Activated CD8-positive, alpha-beta T cell treated with anti-CD3 and anti-CD28 coated beads, Interleukin-2, amount 10 ng/mL, durations not matched to agents 7 days and 5 days (primary cell): ENCODE measurements at regions of chr2 and their contacts with region 1.

Region 1: GRCh38 chr2:69816923-69817542 is 12.4 kb upstream of the GMCL1 start:
- DNase-seq: peak; percentile 87
- ATAC-seq: peak; percentile 75
- H3K4me3 Mint-ChIP-seq: no peak overlapping the region
- H3K27ac Mint-ChIP-seq: no peak overlapping the region
- H3K4me1 Mint-ChIP-seq: peaks cover 11% of the 10 kb centered on the region
- H3K27me3 Mint-ChIP-seq: no peaks in the 10 kb centered on the region

Region 2: GRCh38 chr2:69734035-69734631 is 82.9 kb before region 1 on chr2:
- CTCF ChIA-PET with region 1: interaction called, 21 read pairs
- POLR2A ChIA-PET with region 1: no interaction called
- DNase-seq: no peak
- ATAC-seq: no peak
- H3K4me3 Mint-ChIP-seq: no peak overlapping the region
- H3K27ac Mint-ChIP-seq: no peak overlapping the region
- H3K4me1 Mint-ChIP-seq: no peaks in the 10 kb centered on the region
- H3K27me3 Mint-ChIP-seq: peaks cover 13% of the 10 kb centered on the region

Region 3: DNA sequence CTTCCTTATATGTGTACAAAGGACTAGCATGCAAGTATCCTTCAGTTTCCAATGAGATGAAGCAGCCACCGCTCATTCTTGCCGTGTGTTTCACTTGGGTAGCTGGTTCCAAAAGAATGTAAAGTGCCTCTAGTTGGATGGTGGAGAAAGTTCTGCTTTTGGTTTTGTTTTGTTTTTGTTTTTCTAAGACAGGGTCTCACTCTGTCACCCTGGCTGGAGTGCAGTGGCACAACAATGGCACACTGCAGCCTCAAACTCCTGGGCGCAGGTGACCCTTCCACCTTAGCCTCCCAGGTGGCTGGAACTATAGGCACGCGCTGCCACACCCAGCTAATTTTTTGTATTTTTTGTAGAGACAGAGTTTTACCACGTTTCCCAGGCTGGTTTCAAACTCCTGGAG is 66.8 kb before region 1 on chr2:
- CTCF ChIA-PET with region 1: interaction called, 58 read pairs
- POLR2A ChIA-PET with region 1: interaction called, 4 read pairs
- DNase-seq: no peak
- ATAC-seq: no peak
- H3K4me3 Mint-ChIP-seq: no peak overlapping the region
- H3K27ac Mint-ChIP-seq: no peak overlapping the region
- H3K4me1 Mint-ChIP-seq: peaks cover 7% of the 10 kb centered on the region
- H3K27me3 Mint-ChIP-seq: no peaks in the 10 kb centered on the region

Region 4: DNA sequence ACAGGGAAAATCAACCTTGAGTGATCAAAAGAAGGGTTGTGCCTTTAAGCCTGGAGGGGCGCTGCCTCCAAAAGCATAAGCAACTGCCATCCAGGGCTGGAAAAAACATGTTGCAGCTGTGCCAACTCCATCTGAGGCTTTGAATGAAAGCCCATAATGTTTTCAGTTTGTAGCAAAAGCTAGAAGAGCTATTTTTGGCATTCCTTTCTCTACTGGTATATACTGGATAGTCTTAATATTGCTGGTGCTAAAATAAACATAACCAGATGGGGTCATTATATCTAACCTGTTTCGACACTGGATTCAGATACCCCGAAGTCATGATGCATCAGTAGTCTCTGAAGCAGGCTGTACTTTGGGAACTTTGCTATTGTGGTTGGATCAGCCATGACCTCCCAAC is 50.0 kb before region 1 on chr2:
- CTCF ChIA-PET with region 1: interaction called, 14 read pairs
- POLR2A ChIA-PET with region 1: no interaction called
- DNase-seq: no peak
- ATAC-seq: no peak
- H3K4me3 Mint-ChIP-seq: no peak overlapping the region
- H3K27ac Mint-ChIP-seq: no peak overlapping the region
- H3K4me1 Mint-ChIP-seq: peaks cover 70% of the 10 kb centered on the region
- H3K27me3 Mint-ChIP-seq: no peaks in the 10 kb centered on the region

Region 5: DNA sequence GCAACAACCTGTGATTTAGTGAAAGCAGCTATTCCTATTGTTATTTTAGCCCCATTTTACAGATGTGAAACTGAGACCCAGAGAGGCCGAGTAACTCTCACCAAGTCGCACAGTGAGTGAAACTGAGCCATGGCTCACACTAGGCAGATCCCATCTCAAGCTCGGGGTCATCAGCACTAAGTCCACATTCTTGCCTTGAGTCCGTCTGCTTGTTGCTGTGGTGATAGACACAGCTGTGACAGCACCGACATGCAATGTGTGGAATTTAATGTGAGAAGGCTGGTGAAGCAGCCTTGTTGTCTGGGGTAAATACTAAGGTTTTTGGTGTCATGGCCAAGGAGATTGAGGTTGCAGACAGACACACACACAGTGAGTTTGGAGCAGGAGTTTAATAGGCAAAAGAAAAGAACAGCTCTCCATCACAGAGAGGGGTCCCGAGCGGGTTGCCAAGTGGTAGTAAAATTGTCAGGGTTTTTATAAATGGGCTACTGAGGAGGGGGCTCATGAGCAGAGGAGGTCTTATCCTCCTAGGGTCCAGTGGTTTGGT is 27.8 kb before region 1 on chr2:
- CTCF ChIA-PET with region 1: interaction called, 20 read pairs
- POLR2A ChIA-PET with region 1: no interaction called
- DNase-seq: no peak
- ATAC-seq: no peak
- H3K4me3 Mint-ChIP-seq: no peak overlapping the region
- H3K27ac Mint-ChIP-seq: no peak overlapping the region
- H3K4me1 Mint-ChIP-seq: peaks cover 21% of the 10 kb centered on the region
- H3K27me3 Mint-ChIP-seq: no peaks in the 10 kb centered on the region

Region 6: DNA sequence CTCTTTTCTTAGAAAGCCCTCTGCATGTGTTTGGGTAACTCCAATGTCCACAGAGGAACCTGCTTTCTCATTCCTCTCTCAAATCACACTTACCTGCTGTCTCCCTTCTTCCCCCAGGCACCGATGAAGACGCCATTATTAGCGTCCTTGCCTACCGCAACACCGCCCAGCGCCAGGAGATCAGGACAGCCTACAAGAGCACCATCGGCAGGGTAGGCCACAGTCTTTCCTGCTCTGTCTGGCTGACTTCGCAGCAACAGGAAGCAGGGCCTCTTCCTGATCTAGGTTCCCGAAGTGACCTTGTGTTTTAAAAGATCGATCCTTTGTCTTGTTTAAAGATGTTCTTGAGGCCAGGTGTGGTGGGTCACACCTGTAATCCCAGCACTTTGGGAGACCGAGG is 12.6 kb before region 1 on chr2:
- CTCF ChIA-PET with region 1: interaction called, 33 read pairs
- POLR2A ChIA-PET with region 1: no interaction called
- DNase-seq: peak; percentile 20
- ATAC-seq: peak; percentile 33
- H3K4me3 Mint-ChIP-seq: no peak overlapping the region
- H3K27ac Mint-ChIP-seq: peak overlapping the region; percentile 82
- H3K4me1 Mint-ChIP-seq: peaks cover 19% of the 10 kb centered on the region
- H3K27me3 Mint-ChIP-seq: peaks cover 2% of the 10 kb centered on the region

Region 7: GRCh38 chr2:69848201-69848770 is 31.3 kb after region 1 on chr2:
- CTCF ChIA-PET with region 1: no interaction called
- POLR2A ChIA-PET with region 1: no interaction called
- DNase-seq: no peak
- ATAC-seq: no peak
- H3K4me3 Mint-ChIP-seq: no peak overlapping the region
- H3K27ac Mint-ChIP-seq: no peak overlapping the region
- H3K4me1 Mint-ChIP-seq: no peaks in the 10 kb centered on the region
- H3K27me3 Mint-ChIP-seq: no peaks in the 10 kb centered on the region

Region 8: GRCh38 chr2:69926849-69927515 is 109.9 kb after region 1 on chr2:
- CTCF ChIA-PET with region 1: no interaction called
- POLR2A ChIA-PET with region 1: no interaction called
- DNase-seq: no peak
- ATAC-seq: no peak
- H3K4me3 Mint-ChIP-seq: no peak overlapping the region
- H3K27ac Mint-ChIP-seq: no peak overlapping the region
- H3K4me1 Mint-ChIP-seq: peaks cover 14% of the 10 kb centered on the region
- H3K27me3 Mint-ChIP-seq: no peaks in the 10 kb centered on the region

Region 9: DNA sequence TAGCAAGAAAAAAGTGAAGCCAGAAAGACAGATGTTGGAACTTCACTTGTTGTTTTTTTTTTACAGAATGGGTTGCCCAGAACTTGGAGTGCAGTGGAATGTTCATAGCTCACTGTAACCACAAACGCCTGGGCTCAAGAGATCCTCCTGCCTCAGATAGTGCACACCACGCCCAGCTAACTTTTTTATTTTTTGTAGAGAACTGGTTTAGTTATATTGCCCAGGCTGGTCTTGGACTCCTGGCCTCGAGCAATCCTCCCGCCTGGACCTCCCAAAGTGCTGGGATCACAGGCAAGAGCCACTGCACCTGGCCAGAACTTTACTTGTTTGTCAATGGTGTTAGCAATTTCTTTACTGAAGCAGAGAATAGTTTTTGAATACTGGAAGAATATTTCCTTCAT is 156.3 kb after region 1 on chr2:
- CTCF ChIA-PET with region 1: no interaction called
- POLR2A ChIA-PET with region 1: no interaction called
- DNase-seq: no peak
- ATAC-seq: no peak
- H3K4me3 Mint-ChIP-seq: no peak overlapping the region
- H3K27ac Mint-ChIP-seq: no peak overlapping the region
- H3K4me1 Mint-ChIP-seq: peaks cover 14% of the 10 kb centered on the region
- H3K27me3 Mint-ChIP-seq: peaks cover 4% of the 10 kb centered on the region

Region 10: DNA sequence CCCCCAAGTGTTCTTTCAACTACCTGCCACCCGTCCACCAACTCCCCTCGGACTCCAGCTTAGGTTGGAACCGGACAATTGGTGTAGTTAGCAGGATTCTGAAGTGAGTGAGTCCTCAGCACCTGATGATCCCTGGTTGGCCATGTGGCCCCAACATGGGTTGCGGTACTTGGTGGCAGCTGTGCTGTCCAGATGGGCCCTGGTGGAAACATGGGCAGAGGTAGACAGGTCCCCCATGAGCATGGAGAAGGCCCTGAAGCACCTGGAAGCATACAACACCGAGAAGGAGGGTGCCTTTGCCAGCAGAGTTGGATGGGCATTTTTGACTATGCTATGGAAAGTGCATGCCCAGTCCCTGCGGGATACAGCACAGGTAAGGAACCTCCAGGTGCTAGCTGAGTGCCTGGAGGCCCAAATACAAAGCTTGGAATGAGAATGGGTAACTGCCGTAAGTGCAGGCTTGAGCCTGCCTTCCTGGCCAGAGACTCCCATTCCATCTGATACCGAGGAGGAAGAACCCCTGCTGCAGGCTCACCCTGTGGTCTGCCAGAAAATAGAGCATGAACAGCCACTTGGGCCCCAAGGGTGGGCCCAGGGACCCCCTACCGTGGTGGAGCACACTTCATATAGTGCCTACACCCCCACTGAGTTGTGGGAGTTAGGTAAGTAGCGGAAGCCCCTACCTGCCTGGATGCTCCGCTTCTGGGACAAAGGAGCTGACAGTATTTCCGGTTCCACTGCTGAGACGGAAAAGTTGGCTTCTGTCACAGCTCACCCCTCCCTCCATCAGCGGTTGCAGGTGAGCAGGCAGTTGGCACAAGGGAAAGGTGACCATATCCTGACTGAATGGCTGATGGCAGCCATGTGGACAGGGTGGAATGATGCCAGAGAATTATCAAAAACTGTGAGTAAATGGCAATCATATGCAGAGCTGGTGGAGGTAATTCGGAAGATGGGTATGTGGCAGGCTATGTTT is 385.1 kb after region 1 on chr2:
- CTCF ChIA-PET with region 1: no interaction called
- POLR2A ChIA-PET with region 1: no interaction called
- DNase-seq: no peak
- ATAC-seq: no peak
- H3K4me3 Mint-ChIP-seq: no peak overlapping the region
- H3K27ac Mint-ChIP-seq: no peak overlapping the region
- H3K4me1 Mint-ChIP-seq: no peaks in the 10 kb centered on the region
- H3K27me3 Mint-ChIP-seq: no peaks in the 10 kb centered on the region